ENCODE measurements at regions of chr10 and their contacts with region 1.

Region 1: DNA sequence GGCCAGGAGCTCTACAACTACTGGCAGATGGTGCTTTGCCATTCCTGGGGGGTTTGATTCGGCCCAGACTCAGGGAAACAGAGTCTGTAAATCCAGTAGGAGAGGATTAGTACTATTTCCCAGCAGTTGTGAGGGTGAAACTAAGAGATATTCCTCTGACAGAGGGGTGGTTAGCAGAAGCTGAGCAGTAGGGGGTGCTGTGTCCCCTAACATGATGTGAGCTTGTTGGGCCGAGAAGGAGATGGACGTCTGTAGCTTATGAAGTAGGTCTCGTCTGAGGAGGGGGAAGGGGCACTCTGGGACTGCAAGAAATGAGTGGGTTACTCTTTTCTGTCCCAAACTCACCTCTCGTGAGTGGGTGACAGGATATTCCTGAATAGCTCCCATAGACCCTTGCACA is 179.2 kb upstream of the MBL2 start:
- DNase-seq: peak; percentile 74 to 87
- H3K4me3 ChIP-seq: no peak overlapping the region
- H3K27ac ChIP-seq: no peak overlapping the region
- H3K4me1 ChIP-seq: peaks cover 0 to 5% (median 0%) of the 10 kb centered on the region in 4 experiments; a peak in 2 of 7 replicates
- H3K27me3 ChIP-seq: no peaks in the 10 kb centered on the region
- CTCF ChIP-seq: peak; percentile 72 to 93 (median 73)
- EP300 ChIP-seq: no peak
- POLR2A ChIP-seq: no peak
- RAD21 ChIP-seq: peak; percentile 92 to 93

Region 2: GRCh38 chr10:52818019-52818418 is 133.8 kb before region 1 on chr10:
- CTCF ChIA-PET with region 1: interaction called, 13 read pairs
- POLR2A ChIA-PET with region 1: no interaction called
- DNase-seq: peak in 1 of 2 experiments; percentile 39
- H3K4me3 ChIP-seq: no peak overlapping the region
- H3K27ac ChIP-seq: no peak overlapping the region
- H3K4me1 ChIP-seq: peaks cover 0 to 3% (median 1%) of the 10 kb centered on the region in 4 experiments; a peak in 2 of 7 replicates
- H3K27me3 ChIP-seq: no peaks in the 10 kb centered on the region
- CTCF ChIP-seq: peak in 2 of 3 experiments; percentile 58 to 77; a peak in 3 of 4 replicates
- EP300 ChIP-seq: no peak
- POLR2A ChIP-seq: no peak
- RAD21 ChIP-seq: peak; percentile 86 to 92

Region 3: DNA sequence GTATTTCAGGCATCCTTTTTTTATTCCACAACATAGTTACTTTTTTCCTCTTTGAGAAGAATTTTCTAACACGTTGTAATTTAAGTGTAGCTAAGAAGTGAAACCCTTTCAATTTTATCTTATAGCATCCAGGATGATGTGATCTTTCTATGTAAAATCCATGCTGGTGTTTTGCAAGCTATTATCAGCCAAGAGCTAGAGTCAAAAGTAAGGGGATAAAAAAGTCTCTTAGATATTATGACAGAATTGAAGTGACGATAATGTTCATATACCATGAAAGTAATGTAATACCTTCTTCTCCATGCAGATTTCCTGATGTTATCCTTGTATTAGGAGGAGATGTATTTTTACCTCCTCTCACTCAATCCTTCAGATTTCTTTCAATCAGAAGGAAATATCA is 115.0 kb before region 1 on chr10:
- CTCF ChIA-PET with region 1: no interaction called
- POLR2A ChIA-PET with region 1: no interaction called
- DNase-seq: no peak
- H3K4me3 ChIP-seq: no peak overlapping the region
- H3K27ac ChIP-seq: no peak overlapping the region
- H3K4me1 ChIP-seq: no peaks in the 10 kb centered on the region
- H3K27me3 ChIP-seq: no peaks in the 10 kb centered on the region
- CTCF ChIP-seq: no peak
- EP300 ChIP-seq: no peak
- POLR2A ChIP-seq: no peak
- RAD21 ChIP-seq: no peak

Region 4: DNA sequence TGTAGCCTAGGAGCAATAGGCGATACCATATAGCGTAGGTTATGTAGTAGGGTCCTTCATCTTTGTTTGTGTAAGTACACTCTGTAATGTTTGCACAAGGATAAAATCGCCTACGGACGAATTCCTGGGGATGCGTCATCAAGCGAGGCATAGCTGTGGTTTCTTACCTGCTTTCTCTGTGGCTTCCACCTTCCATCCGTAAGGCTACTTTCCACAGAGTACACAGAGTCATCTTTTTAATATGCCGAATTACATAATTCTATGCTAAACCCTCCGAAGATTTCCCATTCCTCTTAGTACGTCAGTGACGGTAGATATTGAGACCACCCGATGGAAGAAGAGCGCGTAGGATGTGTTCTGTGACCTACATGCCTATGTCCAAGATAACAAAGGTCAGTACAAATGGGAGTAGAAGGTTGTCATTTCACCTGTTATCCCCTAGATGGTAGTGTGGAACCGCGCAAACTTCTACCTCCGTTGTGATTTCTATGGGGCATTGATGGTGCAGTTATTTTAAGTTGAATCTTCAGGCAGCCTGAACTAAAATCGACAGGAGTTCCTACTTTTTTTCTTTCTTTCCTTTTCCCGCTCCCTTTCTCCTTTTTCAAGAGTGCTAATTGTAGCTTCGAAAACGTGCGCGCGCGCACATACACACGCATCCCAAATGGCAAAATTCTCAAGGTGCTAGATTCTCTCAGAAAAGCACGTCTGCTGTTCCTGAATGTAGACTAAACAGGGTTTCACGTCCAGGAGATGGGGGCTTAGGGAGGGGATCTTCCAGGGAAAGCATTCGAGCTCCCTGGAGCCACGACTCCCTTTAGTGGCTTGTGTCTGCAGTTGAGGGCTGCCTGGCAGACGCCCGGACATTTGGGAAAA is 67.6 kb before region 1 on chr10:
- CTCF ChIA-PET with region 1: interaction called, 79 read pairs
- POLR2A ChIA-PET with region 1: no interaction called
- DNase-seq: peak; percentile 75 to 85
- H3K4me3 ChIP-seq: no peak overlapping the region
- H3K27ac ChIP-seq: peak overlapping the region; percentile 43
- H3K4me1 ChIP-seq: peaks cover 0 to 3% (median 0%) of the 10 kb centered on the region in 4 experiments; a peak in 1 of 7 replicates
- H3K27me3 ChIP-seq: no peaks in the 10 kb centered on the region
- CTCF ChIP-seq: peak in 2 of 3 experiments; percentile 64 to 82; a peak in 3 of 4 replicates
- EP300 ChIP-seq: no peak
- POLR2A ChIP-seq: no peak
- RAD21 ChIP-seq: peak; percentile 97

Region 5: GRCh38 chr10:52940921-52941320 is 10.9 kb before region 1 on chr10:
- CTCF ChIA-PET with region 1: interaction called, 10 read pairs
- POLR2A ChIA-PET with region 1: no interaction called
- DNase-seq: no peak
- H3K4me3 ChIP-seq: no peak overlapping the region
- H3K27ac ChIP-seq: no peak overlapping the region
- H3K4me1 ChIP-seq: no peaks in the 10 kb centered on the region; a peak in 1 of 7 replicates
- H3K27me3 ChIP-seq: no peaks in the 10 kb centered on the region
- CTCF ChIP-seq: no peak
- EP300 ChIP-seq: no peak
- POLR2A ChIP-seq: no peak
- RAD21 ChIP-seq: no peak

Region 6: GRCh38 chr10:52965938-52966401 is 14.1 kb after region 1 on chr10:
- CTCF ChIA-PET with region 1: interaction called, 33 read pairs
- POLR2A ChIA-PET with region 1: interaction called, 4 read pairs
- DNase-seq: peak in 1 of 2 experiments; percentile 53
- H3K4me3 ChIP-seq: no peak overlapping the region
- H3K27ac ChIP-seq: peak overlapping the region; percentile 91
- H3K4me1 ChIP-seq: peaks cover 2 to 38% (median 9%) of the 10 kb centered on the region in 4 experiments; a peak in 5 of 7 replicates
- H3K27me3 ChIP-seq: no peaks in the 10 kb centered on the region
- CTCF ChIP-seq: no peak
- EP300 ChIP-seq: peak; percentile 32 to 94
- POLR2A ChIP-seq: peak in 1 of 2 experiments; percentile 34; a peak in 1 of 3 replicates
- RAD21 ChIP-seq: peak in 1 of 2 experiments; percentile 37; a peak in 2 of 4 replicates

Region 7: DNA sequence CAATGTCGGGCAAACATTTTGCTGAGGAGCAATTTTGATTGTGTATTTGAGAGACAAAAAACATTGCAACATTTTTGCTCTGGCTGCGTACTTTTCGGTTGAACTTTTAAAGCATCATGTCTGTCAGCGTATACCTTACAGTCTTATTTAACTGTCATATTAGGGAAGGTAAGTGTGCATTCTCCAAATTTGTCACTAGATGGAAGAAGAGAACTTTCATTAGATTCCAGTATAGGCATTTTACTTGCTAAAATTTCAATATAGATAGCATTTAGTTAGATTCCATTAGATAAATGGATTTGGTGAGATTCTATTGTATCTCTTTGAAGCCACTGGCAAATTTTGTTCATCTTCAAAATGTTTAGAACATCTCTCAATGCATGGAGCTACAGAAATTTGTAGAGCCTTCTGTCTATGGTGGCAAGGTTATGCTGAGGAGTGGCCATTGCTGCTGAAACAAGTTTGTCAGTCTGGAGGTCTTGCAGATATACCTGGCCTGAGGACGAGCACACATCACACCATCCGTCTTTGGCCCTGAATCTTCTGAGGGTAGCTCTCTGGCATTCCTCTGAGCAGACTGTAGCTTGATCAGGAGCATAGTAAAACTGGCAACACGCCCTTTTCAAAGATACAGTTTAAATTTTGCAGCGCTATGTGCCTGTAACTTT is 258.3 kb after region 1 on chr10:
- CTCF ChIA-PET with region 1: interaction called, 68 read pairs
- POLR2A ChIA-PET with region 1: interaction called, 3 read pairs
- DNase-seq: peak in 1 of 2 experiments; percentile 9
- H3K4me3 ChIP-seq: no peak overlapping the region
- H3K27ac ChIP-seq: no peak overlapping the region; the same call in 1 of the 2 replicates
- H3K4me1 ChIP-seq: peaks cover 0 to 3% (median 0%) of the 10 kb centered on the region in 4 experiments; a peak in 2 of 7 replicates
- H3K27me3 ChIP-seq: no peaks in the 10 kb centered on the region
- CTCF ChIP-seq: peak in 1 of 3 experiments; percentile 56; a peak in 2 of 4 replicates
- EP300 ChIP-seq: no peak
- POLR2A ChIP-seq: no peak
- RAD21 ChIP-seq: peak; percentile 59 to 79